ENCODE measurements at regions of chr1 and their contacts with region 1.

Region 1: GRCh38 chr1:156104065-156104810 is 10.3 kb upstream of the LMNA start:
- DNase-seq: peak; percentile 35
- ATAC-seq: no peak
- H3K4me3 Mint-ChIP-seq: no peak overlapping the region
- H3K27ac Mint-ChIP-seq: peak overlapping the region; percentile 66
- H3K4me1 Mint-ChIP-seq: peaks cover 63% of the 10 kb centered on the region
- H3K27me3 Mint-ChIP-seq: no peaks in the 10 kb centered on the region
- CTCF ChIP-seq: no peak

Region 2: DNA sequence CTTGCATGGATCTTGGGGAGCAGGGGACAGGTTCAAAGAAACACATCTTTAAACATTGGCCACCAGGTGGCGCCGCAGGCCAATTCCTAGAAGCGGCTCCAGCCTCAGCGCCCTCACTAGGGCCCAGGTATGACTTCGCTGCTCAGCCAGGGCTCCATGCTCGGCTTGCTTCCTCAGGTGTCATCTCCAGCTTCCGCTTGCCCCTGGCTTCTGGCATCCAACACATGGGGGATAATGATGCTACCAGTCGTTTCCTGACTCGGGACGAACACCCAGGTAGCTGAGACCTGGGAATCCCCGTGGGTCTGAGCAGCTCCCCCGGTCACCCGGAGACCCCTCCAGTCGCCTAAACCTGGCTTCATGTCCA is 13.4 kb before region 1 on chr1:
- CTCF ChIA-PET with region 1: interaction called, 29 read pairs
- POLR2A ChIA-PET with region 1: interaction called, 61 read pairs
- intact Hi-C with region 1: loop called (anchors 2 kb)
- DNase-seq: peak; percentile 81
- ATAC-seq: peak; percentile 92
- H3K4me3 Mint-ChIP-seq: no peak overlapping the region
- H3K27ac Mint-ChIP-seq: peak overlapping the region; percentile 48
- H3K4me1 Mint-ChIP-seq: peaks cover 9% of the 10 kb centered on the region
- H3K27me3 Mint-ChIP-seq: peaks cover 8% of the 10 kb centered on the region
- CTCF ChIP-seq: peak; percentile 62

Region 3: DNA sequence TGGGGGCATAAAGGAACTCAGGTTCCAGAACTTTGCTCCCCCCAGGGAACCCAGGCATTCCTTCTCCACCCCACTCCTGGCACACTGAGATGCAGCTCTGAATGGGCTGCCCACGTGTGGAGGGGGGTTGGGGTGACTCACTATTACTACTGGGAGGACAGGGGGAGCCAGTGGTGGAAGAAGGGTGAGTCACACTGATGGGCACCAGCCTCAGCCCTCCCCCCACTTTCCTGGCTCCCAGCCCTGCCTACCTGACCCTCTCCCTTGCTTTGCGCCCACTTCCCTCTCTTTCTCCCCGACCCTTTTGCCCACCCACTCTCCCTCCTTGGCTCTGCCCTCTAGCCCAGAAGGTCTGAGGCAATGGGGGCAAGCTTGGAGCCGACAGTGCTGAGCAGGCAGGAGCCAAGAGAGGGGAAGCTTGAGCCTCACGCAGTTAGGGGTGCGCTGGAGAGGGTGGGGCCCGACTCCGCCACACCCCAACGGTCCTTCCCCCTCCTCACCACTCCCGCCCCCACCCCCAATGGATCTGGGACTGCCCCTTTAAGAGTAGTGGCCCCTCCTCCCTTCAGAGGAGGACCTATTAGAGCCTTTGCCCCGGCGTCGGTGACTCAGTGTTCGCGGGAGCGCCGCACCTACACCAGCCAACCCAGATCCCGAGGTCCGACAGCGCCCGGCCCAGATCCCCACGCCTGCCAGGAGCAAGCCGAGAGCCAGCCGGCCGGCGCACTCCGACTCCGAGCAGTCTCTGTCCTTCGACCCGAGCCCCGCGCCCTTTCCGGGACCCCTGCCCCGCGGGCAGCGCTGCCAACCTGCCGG is 10.1 kb after region 1 on chr1 and contains the start of gene LMNA:
- CTCF ChIA-PET with region 1: no interaction called
- POLR2A ChIA-PET with region 1: interaction called, 78 read pairs
- intact Hi-C with region 1: loop called (anchors 1 kb)
- DNase-seq: peak; percentile 65
- ATAC-seq: peak; percentile 84
- H3K4me3 Mint-ChIP-seq: peak within 1 kb of the TSS; percentile 86
- H3K27ac Mint-ChIP-seq: peak within 1 kb of the TSS; percentile 77
- H3K4me1 Mint-ChIP-seq: peaks cover 33% of the 10 kb centered on the region
- H3K27me3 Mint-ChIP-seq: peaks cover 13% of the 10 kb centered on the region
- CTCF ChIP-seq: no peak
- total RNA-seq, gene LMNA: 40.4 and 47.5 TPM in 2 replicates

Region 4: GRCh38 chr1:156123356-156124196 is 19.3 kb after region 1 on chr1:
- CTCF ChIA-PET with region 1: interaction called, 422 read pairs
- POLR2A ChIA-PET with region 1: interaction called, 154 read pairs
- intact Hi-C with region 1: loop called (anchors 1 kb)
- DNase-seq: peak; percentile 41
- ATAC-seq: peak; percentile 10
- H3K4me3 Mint-ChIP-seq: no peak overlapping the region
- H3K27ac Mint-ChIP-seq: no peak overlapping the region
- H3K4me1 Mint-ChIP-seq: peaks cover 46% of the 10 kb centered on the region
- H3K27me3 Mint-ChIP-seq: peaks cover 4% of the 10 kb centered on the region
- CTCF ChIP-seq: no peak

Region 5: GRCh38 chr1:156129706-156130581 is 25.7 kb after region 1 on chr1:
- CTCF ChIA-PET with region 1: interaction called, 422 read pairs
- POLR2A ChIA-PET with region 1: interaction called, 154 read pairs
- intact Hi-C with region 1: loop called (anchors 1 kb)
- DNase-seq: peak; percentile 77
- ATAC-seq: peak; percentile 53
- H3K4me3 Mint-ChIP-seq: no peak overlapping the region
- H3K27ac Mint-ChIP-seq: no peak overlapping the region
- H3K4me1 Mint-ChIP-seq: peaks cover 28% of the 10 kb centered on the region
- H3K27me3 Mint-ChIP-seq: peaks cover 2% of the 10 kb centered on the region
- CTCF ChIP-seq: peak; percentile 71

Region 6: GRCh38 chr1:156154317-156154749 is 50.1 kb after region 1 on chr1:
- CTCF ChIA-PET with region 1: no interaction called
- POLR2A ChIA-PET with region 1: no interaction called
- intact Hi-C with region 1: loop called (anchors 2 kb)
- DNase-seq: peak; percentile 66
- ATAC-seq: peak; percentile 95
- H3K4me3 Mint-ChIP-seq: peak overlapping the region; percentile 81
- H3K27ac Mint-ChIP-seq: peak overlapping the region; percentile 82
- H3K4me1 Mint-ChIP-seq: peaks cover 95% of the 10 kb centered on the region
- H3K27me3 Mint-ChIP-seq: peaks cover 9% of the 10 kb centered on the region
- CTCF ChIP-seq: no peak

Region 7: GRCh38 chr1:156251527-156251926 is 147.3 kb after region 1 on chr1:
- CTCF ChIA-PET with region 1: no interaction called
- POLR2A ChIA-PET with region 1: no interaction called
- intact Hi-C with region 1: no loop called
- DNase-seq: no peak
- ATAC-seq: no peak
- H3K4me3 Mint-ChIP-seq: no peak overlapping the region
- H3K27ac Mint-ChIP-seq: no peak overlapping the region
- H3K4me1 Mint-ChIP-seq: no peaks in the 10 kb centered on the region
- H3K27me3 Mint-ChIP-seq: no peaks in the 10 kb centered on the region
- CTCF ChIP-seq: no peak